ENCODE measurements at regions of chr11 and their contacts with region 1.

Region 1: DNA sequence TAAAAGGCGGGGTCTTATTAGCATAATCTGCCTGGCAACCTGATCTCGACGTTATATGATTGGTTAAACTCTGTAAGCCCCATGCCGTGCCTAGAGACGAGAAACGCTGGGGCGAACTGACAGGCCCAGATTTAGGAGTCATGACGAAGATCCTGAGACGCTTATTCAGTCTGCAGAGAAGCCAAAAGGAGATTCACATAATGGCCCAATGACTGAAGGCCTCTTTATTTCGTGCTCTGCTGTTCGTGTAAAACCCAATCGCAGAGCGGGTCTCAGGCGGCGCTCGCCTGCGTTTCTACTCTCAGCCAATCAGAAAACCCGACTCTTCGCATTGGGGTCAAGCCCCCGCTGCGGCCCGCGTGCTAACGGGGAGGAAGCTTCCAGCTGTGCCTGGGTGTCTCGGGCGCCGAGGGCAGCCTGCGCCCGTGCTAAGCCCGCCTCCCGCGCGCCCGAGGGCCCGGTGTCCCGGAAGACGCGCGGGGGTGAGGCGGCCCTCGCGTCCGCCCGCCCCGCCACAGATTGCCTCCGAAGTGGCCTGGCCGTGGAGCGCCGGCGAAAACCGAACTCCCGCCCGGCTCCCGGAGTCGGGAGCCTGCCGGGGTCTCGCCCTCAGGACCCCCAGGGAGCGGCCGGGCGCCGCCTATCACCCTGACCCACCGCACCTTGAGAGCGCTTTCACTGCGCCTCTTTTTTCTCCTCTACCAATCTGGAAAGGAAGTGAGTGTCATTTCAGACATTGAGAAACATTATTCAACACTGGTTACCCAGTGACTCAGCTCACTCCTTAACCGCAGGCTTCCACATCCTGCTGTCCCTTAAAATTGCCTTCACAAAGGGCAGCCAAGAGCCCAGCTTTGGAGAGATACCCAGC is 446 bp upstream of the PRDM10 start:
- DNase-seq: peak; percentile 96 to 97
- ATAC-seq: peak; percentile 96
- H3K4me3 ChIP-seq: peak overlapping the region; percentile 94 to 98
- H3K27ac ChIP-seq: peak overlapping the region; percentile 99
- H3K4me1 ChIP-seq: no peaks in the 10 kb centered on the region
- H3K27me3 ChIP-seq: no peaks in the 10 kb centered on the region

Region 2: DNA sequence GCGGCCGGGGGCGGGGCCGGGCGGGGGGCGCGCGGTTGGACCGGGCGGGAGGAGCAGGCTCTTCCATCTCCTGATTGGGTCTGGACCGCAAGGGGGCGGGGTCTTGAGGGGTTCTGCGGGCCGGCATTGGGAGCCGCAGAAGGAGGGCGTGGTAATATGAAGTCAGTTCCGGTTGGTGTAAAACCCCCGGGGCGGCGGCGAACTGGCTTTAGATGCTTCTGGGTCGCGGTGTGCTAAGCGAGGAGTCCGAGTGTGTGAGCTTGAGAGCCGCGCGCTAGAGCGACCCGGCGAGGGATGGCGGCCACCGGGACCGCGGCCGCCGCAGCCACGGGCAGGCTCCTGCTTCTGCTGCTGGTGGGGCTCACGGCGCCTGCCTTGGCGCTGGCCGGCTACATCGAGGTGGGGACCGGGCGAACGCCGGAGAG is 66.6 kb after region 1 on chr11 and contains the start of gene APLP2:
- intact Hi-C with region 1: loop called (anchors 2 kb)
- DNase-seq: peak; percentile 99 to 100
- ATAC-seq: peak; percentile 97
- H3K4me3 ChIP-seq: peak within 1 kb of the TSS; percentile 90 to 100
- H3K27ac ChIP-seq: peak within 1 kb of the TSS; percentile 80 to 100
- H3K4me1 ChIP-seq: peaks cover 0 to 2% of the 10 kb centered on the region in 2 donors
- H3K27me3 ChIP-seq: no peaks in the 10 kb centered on the region
- total RNA-seq, gene APLP2: 367 to 414 TPM

Region 3: DNA sequence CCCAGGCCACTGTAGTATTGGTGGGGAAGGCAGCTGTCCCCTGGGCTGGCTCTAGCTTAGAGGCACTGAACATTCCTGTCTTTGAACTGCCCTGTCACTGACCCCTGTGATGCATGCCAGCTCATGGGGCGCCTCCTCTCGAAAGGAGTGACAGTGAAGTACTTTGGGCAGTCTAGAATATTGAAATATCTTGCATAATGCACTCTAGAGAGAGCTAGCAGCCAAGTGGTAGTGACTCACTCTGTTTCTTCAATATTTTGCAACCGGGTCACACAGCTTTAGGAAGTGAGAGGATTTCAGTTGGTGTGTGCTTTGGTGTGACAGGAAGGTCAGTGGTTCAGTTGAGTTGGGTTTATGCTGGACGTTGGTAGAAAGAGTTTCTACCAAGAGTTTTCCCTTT is 121.0 kb after region 1 on chr11:
- intact Hi-C with region 1: loop called in 1 of 2 experiments (anchors 10 kb)
- DNase-seq: peak; percentile 83 to 90
- ATAC-seq: peak; percentile 92
- H3K4me3 ChIP-seq: no peak overlapping the region
- H3K27ac ChIP-seq: peak overlapping the region in 1 of 2 donors; percentile 66
- H3K4me1 ChIP-seq: peaks cover 0 to 1% of the 10 kb centered on the region in 2 donors
- H3K27me3 ChIP-seq: no peaks in the 10 kb centered on the region

Region 4: GRCh38 chr11:130131961-130132850 is 129.1 kb after region 1 on chr11:
- intact Hi-C with region 1: loop called (anchors 5 to 10 kb)
- DNase-seq: no peak
- ATAC-seq: peak; percentile 83
- H3K4me3 ChIP-seq: no peak overlapping the region
- H3K27ac ChIP-seq: no peak overlapping the region
- H3K4me1 ChIP-seq: no peaks in the 10 kb centered on the region
- H3K27me3 ChIP-seq: no peaks in the 10 kb centered on the region

Region 5: DNA sequence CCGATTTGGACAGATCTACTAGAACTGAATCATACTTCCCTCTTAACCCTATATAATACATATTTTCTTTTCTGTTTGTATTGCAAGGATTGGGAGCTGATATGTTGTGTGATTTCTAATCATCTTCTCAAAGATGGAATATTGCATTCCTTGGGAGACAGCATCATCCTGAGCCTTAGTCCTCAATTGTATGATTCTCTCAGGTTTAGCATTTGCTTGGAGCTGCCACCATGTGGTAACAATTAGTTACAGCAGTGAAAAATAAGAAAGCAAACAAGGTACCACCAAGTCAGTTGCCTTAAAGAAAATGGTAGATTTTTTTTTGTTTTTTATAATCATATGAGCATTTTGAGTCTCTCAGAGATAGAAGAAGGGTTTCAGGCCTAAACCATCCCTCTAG is 901.3 kb after region 1 on chr11:
- intact Hi-C with region 1: loop called in 1 of 2 experiments (anchors 10 kb)
- DNase-seq: no peak
- ATAC-seq: no peak
- H3K4me3 ChIP-seq: no peak overlapping the region
- H3K27ac ChIP-seq: no peak overlapping the region
- H3K4me1 ChIP-seq: peaks cover 0 to 4% of the 10 kb centered on the region in 2 donors
- H3K27me3 ChIP-seq: no peaks in the 10 kb centered on the region

Measured in aorta (tissue), 5 donors.